ENCODE measurements at regions of chr1 and their contacts with region 1.

Region 1: GRCh38 chr1:212070720-212071302 is 35.3 kb downstream of the DTL start:
- DNase-seq: peak in 4 of 42 donors; percentile 11 to 45 (median 18)

Region 2: DNA sequence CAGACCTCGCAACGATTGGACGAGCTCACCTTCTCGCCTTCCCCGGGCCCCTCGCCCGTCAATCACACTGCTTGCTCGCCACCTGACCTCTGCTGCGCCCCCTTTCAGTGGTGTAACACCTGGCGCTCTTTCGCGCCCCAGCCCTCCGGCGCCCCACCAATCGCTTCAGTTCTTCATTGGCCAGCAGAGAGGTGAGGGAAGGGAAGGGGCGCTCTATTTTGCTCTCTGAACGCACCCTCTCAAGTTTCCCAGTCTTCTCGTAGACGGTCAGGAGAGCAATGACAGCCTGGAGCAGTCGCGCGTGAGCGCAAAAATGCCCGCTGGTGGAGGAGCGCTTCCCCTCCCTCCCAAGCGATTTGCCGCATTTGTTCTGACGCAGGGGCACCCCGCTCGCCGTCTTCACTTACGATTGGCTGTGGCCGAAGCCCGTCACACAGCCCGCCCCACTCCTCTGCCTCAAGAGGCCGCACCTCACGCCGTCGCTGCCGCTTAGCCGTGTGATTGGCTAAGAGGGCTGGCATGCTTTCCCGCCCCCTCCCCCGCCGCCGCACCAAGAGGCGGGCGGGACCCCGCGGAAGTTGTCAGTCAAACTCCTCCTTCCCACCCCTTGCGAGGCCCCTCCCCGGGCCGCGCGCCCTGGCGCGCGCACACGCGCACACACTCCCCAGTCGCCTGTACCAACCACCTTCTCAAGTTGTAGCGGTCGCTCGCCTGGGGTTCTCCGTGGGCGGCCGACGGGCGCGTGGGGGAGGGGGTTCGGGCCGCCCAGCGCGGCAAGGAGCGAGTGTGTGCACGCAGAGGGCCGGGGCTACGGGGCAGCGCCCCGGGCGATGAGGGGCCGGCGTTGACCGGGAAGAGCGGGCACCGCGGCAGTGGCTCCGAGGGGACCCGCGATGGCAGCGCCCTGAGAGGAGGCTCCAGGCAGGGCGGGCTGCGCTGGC is 214.2 kb after region 1 on chr1 and contains the start of gene PPP2R5A:
- intact Hi-C with region 1: loop called (anchors 5 kb)
- DNase-seq: peak; percentile 97 to 100 (median 99)